ENCODE measurements at regions of chr16 and their contacts with region 1.

Region 1: DNA sequence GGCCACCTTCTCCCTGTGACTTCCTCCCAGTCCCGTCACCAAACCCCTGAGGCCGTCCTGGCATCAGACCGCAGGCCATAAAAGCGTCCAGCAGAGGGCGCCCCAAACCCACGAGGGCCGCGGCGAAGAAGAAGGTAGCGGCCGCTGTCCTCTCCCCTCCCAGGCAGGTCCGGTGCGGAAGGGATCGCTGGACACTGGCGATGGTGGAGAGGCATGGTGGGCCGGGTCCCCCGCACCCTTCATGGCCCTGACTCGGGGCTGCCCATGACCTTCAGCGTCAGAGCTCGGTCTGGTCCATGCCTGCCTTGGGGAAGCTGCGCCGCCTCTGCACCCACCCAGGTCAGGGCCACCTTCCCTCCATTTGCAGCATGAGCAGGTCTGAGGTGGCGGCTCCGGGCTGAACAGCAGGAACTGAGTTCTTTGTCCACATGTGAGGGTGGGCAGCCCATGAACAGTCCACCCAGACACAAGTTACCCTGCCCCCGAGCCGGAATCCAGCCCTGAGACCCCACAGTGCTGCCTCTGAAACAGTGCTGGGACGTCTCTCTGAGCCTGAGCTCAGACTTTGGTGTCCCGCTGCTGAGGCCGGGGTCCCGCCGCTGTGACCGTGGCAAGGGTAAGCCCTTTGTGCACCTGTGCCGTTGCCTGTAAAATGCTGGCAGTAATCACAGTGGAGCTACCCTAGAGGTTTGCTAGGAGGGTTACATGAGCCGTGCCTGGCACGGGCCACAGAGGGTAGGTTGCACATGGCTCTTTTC is 40.8 kb upstream of the CMIP start:
- DNase-seq: peak; percentile 45 to 86 (median 68)
- ATAC-seq: peak; percentile 96
- H3K4me3 ChIP-seq: peak overlapping the region; percentile 34
- H3K4me3 Mint-ChIP-seq: peak overlapping the region in 5 of 10 donors; percentile 25 to 43 (median 32)
- H3K27ac ChIP-seq: no peak overlapping the region
- H3K27ac Mint-ChIP-seq: peak overlapping the region in 1 of 9 donors; percentile 18
- H3K4me1 ChIP-seq: no peaks in the 10 kb centered on the region
- H3K4me1 Mint-ChIP-seq: peaks cover 0 to 4% (median 0%) of the 10 kb centered on the region in 7 donors
- H3K27me3 ChIP-seq: no peaks in the 10 kb centered on the region
- H3K27me3 Mint-ChIP-seq: peaks cover 0 to 6% (median 0%) of the 10 kb centered on the region in 5 donors

Region 2: DNA sequence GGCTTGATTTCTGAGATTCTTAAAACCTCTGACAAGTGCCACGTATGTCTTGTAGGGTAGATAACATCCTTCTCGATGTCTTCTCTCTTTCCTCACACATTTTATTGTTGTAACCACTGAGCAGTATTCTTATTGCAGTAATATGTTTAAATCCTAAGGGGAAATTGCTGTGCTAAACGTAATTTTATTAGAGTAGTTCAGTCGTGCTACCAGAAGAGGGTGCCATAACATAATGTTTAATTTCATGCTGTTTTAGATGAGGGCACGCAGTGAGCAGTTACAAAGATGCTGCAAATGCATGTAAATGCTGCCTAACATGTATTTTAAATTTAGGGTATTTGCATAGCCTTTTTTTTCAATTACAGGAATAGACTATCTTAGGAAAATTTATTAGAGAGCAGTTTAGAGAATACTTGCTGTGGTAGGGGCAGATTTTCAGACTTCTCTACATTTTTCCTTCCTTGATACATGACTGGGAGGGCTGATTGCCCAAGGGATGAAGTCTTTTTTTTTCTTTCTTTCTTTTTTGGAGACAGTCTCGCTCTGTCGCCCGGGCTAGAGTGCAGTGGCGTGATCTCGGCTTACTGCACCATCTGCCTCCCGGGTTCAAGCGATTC is 37.4 kb before region 1 on chr16:
- CTCF ChIA-PET with region 1: interaction called, 4 read pairs
- POLR2A ChIA-PET with region 1: no interaction called
- intact Hi-C with region 1: loop called in 1 of 2 experiments (anchors 1 kb)
- DNase-seq: peak in 7 of 9 donors; percentile 20 to 62 (median 52)
- ATAC-seq: peak; percentile 86
- H3K4me3 ChIP-seq: no peak overlapping the region
- H3K4me3 Mint-ChIP-seq: no peak overlapping the region
- H3K27ac ChIP-seq: no peak overlapping the region
- H3K27ac Mint-ChIP-seq: no peak overlapping the region
- H3K4me1 ChIP-seq: no peaks in the 10 kb centered on the region
- H3K4me1 Mint-ChIP-seq: peaks cover 0 to 3% (median 0%) of the 10 kb centered on the region in 7 donors
- H3K27me3 ChIP-seq: no peaks in the 10 kb centered on the region
- H3K27me3 Mint-ChIP-seq: no peaks in the 10 kb centered on the region

Region 3: GRCh38 chr16:81469710-81470535 is 66.1 kb after region 1 on chr16:
- CTCF ChIA-PET with region 1: interaction called, 4 read pairs
- POLR2A ChIA-PET with region 1: interaction called, 3 read pairs
- intact Hi-C with region 1: loop called in 1 of 2 experiments (anchors 1 kb)
- DNase-seq: peak in 7 of 9 donors; percentile 45 to 79 (median 74)
- ATAC-seq: peak; percentile 92
- H3K4me3 ChIP-seq: peak overlapping the region; percentile 52
- H3K4me3 Mint-ChIP-seq: peak overlapping the region; percentile 52 to 85 (median 78)
- H3K27ac ChIP-seq: peak overlapping the region; percentile 63
- H3K27ac Mint-ChIP-seq: peak overlapping the region; percentile 83 to 97 (median 91)
- H3K4me1 ChIP-seq: peaks cover 37 to 46% of the 10 kb centered on the region in 2 donors
- H3K4me1 Mint-ChIP-seq: peaks cover 58 to 91% (median 78%) of the 10 kb centered on the region in 7 donors
- H3K27me3 ChIP-seq: no peaks in the 10 kb centered on the region
- H3K27me3 Mint-ChIP-seq: no peaks in the 10 kb centered on the region

Region 4: DNA sequence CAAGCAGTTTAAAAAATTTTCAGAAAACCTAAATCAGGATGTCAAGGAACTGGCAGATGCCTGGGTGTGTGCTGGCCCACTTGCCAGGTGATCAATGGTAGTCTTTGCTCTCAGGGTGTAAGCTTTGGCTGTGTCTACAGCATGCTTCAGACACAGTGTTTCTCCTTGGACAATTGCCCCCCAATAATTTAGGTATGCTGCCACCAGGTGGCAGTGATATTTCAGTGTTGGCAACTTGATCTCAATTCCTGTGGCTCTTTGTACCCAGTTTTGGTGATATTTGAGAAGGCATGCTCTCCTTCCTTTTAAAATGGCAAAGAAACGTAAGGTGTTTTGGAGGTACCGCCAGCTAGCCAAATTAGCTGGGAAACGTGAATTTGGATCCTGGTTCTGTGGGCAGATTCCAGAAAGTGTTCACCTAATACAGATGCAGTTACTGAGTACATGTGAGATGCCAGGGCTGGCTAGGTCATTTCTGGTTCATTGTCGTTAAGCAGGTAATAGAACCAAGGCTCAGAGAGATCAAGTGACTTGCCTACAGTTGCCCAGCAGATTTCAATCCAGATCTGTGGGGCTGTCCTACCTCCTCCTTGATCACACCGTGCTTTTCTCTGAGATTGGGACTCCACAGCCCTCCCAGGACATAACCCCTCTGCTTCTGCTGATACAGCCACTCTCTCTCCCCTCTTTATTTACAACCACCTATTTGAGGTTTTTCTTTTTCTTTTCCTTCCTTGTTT is 219.7 kb after region 1 on chr16:
- CTCF ChIA-PET with region 1: interaction called, 12 read pairs
- POLR2A ChIA-PET with region 1: no interaction called
- intact Hi-C with region 1: loop called in 1 of 2 experiments (anchors 1 kb)
- DNase-seq: peak in 7 of 9 donors; percentile 10 to 58 (median 39)
- ATAC-seq: peak; percentile 65
- H3K4me3 ChIP-seq: no peak overlapping the region
- H3K4me3 Mint-ChIP-seq: no peak overlapping the region
- H3K27ac ChIP-seq: no peak overlapping the region
- H3K27ac Mint-ChIP-seq: peak overlapping the region in 4 of 9 donors; percentile 1 to 54 (median 18)
- H3K4me1 ChIP-seq: no peaks in the 10 kb centered on the region
- H3K4me1 Mint-ChIP-seq: peaks cover 0 to 25% (median 0%) of the 10 kb centered on the region in 7 donors
- H3K27me3 ChIP-seq: no peaks in the 10 kb centered on the region
- H3K27me3 Mint-ChIP-seq: no peaks in the 10 kb centered on the region

Region 5: GRCh38 chr16:81723098-81723723 is 319.4 kb after region 1 on chr16:
- CTCF ChIA-PET with region 1: interaction called, 4 read pairs
- POLR2A ChIA-PET with region 1: no interaction called
- intact Hi-C with region 1: loop called (anchors 1 kb)
- DNase-seq: peak in 7 of 9 donors; percentile 51 to 72 (median 69)
- ATAC-seq: peak; percentile 86
- H3K4me3 ChIP-seq: no peak overlapping the region
- H3K4me3 Mint-ChIP-seq: no peak overlapping the region
- H3K27ac ChIP-seq: no peak overlapping the region
- H3K27ac Mint-ChIP-seq: peak overlapping the region in 2 of 9 donors; percentile 19 to 67
- H3K4me1 ChIP-seq: no peaks in the 10 kb centered on the region
- H3K4me1 Mint-ChIP-seq: peaks cover 6 to 21% (median 12%) of the 10 kb centered on the region in 7 donors
- H3K27me3 ChIP-seq: no peaks in the 10 kb centered on the region
- H3K27me3 Mint-ChIP-seq: peaks cover 0 to 4% (median 0%) of the 10 kb centered on the region in 5 donors

Measured in naive thymus-derived CD4-positive, alpha-beta T cell (primary cell).